Ovary (tissue), 10 donors: ENCODE measurements at regions of chr22 and their contacts with region 1.

Region 1: DNA sequence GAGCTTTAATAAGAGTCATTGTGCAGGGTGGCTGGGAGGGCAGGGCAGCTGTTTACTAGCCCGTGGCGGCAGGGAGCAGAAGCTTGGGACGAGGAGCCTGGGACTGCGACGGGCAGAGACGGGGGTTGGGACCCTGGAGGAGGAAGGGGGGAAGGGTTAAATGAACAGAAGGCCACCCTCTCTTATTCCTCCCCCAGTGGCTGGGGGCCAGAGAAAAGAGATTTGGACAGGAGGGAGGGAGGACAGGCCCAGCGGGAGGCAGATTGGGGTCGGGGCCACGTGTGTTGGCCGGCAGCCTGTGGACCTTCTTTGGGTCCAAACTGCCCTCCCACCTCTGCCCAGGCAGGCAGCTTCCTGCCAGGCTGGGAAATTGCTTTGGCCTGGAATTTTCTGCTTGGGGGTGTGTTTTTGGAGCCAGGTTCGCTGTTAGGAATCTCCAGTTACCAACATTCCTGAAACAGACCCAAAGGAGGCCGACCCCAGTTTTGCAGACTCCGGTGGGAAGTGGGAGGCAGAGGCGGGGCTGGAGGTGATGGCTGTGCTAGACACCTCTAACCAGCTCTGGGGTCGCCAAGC is 50.2 kb downstream of the APOL3 start:
- DNase-seq: peak in 4 of 5 donors; percentile 32 to 75 (median 38)
- H3K4me3 ChIP-seq: no peak overlapping the region
- H3K27ac ChIP-seq: no peak overlapping the region
- H3K4me1 ChIP-seq: peaks cover 6% of the 10 kb centered on the region
- H3K27me3 ChIP-seq: no peaks in the 10 kb centered on the region
- CTCF ChIP-seq: no peak
- EP300 ChIP-seq: no peak
- POLR2A ChIP-seq: no peak

Region 2: DNA sequence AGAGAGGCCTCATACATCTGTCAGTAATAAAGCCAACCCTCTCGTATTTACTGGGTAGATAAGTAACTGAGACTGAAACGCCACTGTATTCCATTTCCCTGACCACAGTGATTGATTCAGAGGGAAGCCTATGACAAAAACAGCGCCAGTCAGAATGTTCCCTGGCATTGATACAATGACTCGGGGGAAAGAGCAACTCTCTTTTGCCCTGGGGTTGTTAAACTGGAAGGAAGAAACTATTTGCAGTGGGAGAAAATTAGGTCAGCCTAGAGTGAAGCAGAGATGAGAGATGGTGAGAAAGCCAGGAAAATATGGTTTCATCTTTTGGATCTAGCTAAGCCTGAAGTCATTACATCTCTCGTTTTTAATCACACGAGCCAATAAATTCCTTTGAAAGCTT is 33.1 kb before region 1 on chr22:
- intact Hi-C with region 1: loop called in 1 of 4 experiments (anchors 2 kb)
- DNase-seq: no peak
- H3K4me3 ChIP-seq: no peak overlapping the region
- H3K27ac ChIP-seq: no peak overlapping the region
- H3K4me1 ChIP-seq: no peaks in the 10 kb centered on the region
- H3K27me3 ChIP-seq: no peaks in the 10 kb centered on the region
- CTCF ChIP-seq: no peak
- EP300 ChIP-seq: no peak
- POLR2A ChIP-seq: no peak